AG04449 (cell line): ENCODE measurements at regions of chr4 and their contacts with region 1.

Region 1: GRCh38 chr4:185039508-185040273 is 21.4 kb downstream of the HELT start:
- DNase-seq: peak; percentile 5
- H3K4me3 ChIP-seq: peak overlapping the region; percentile 36
- CTCF ChIP-seq: peak; percentile 58

Region 2: GRCh38 chr4:185142912-185143595 is 103.4 kb after region 1 on chr4 and contains the start of gene SLC25A4:
- CTCF ChIA-PET with region 1: interaction called, 11 read pairs
- POLR2A ChIA-PET with region 1: no interaction called
- DNase-seq: no peak
- H3K4me3 ChIP-seq: peak within 1 kb of the TSS; percentile 88
- CTCF ChIP-seq: peak; percentile 58